IMR-90 (cell line): ENCODE measurements at regions of chr17 and their contacts with region 1.

Region 1: DNA sequence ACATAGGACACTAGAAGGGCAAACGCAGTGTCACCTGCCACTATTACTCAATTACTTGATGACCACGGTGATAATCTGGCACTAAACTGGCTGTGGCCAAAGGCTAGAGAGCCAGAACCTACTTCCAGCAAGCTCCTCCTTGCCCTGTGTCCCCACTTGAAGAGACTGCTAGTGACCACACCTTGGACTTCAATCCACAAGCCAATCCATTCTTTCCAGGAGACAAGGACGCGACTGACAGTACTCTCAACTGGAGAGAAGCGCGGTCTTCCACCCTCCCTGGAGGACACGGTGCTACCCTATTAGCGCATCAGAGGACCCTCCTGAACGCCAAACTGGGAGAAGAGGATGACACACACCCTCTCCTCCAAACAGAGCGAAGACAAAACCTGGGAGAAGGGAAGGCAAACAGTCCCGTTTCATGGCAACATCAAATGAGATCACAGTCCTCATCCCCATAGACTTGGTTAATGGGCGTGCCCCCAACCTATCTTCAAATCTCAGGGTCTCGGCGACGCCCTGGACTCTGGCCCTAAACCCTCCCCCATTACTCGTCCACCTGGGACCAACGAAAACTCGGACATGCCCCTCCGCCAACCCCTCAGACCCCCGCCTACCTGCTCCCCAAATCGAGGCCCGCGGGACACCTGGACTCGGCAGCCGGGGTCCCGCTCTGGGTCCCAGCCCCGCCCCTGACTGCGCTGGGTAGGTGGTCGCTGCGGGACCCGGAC is 508 bp downstream of the FLCN start:
- DNase-seq: peak; percentile 31
- ATAC-seq: peak; percentile 25
- H3K4me3 ChIP-seq: peak overlapping the region; percentile 93
- H3K27ac ChIP-seq: peak overlapping the region; percentile 100
- H3K4me1 ChIP-seq: peaks cover 4% of the 10 kb centered on the region
- H3K27me3 ChIP-seq: no peaks in the 10 kb centered on the region
- CTCF ChIP-seq: no peak
- POLR2A ChIP-seq: no peak
- RAD21 ChIP-seq: no peak

Region 2: GRCh38 chr17:17141860-17142552 is 94.5 kb before region 1 on chr17:
- CTCF ChIA-PET with region 1: no interaction called
- POLR2A ChIA-PET with region 1: no interaction called
- dilution Hi-C with region 1: no loop called
- in situ Hi-C with region 1: no loop called
- intact Hi-C with region 1: loop called (anchors 1 kb)
- DNase-seq: peak; percentile 50
- ATAC-seq: peak; percentile 62
- H3K4me3 ChIP-seq: no peak overlapping the region
- H3K27ac ChIP-seq: no peak overlapping the region
- H3K4me1 ChIP-seq: peaks cover 8% of the 10 kb centered on the region
- H3K27me3 ChIP-seq: no peaks in the 10 kb centered on the region
- CTCF ChIP-seq: peak; percentile 81
- POLR2A ChIP-seq: no peak
- RAD21 ChIP-seq: peak; percentile 81

Region 3: DNA sequence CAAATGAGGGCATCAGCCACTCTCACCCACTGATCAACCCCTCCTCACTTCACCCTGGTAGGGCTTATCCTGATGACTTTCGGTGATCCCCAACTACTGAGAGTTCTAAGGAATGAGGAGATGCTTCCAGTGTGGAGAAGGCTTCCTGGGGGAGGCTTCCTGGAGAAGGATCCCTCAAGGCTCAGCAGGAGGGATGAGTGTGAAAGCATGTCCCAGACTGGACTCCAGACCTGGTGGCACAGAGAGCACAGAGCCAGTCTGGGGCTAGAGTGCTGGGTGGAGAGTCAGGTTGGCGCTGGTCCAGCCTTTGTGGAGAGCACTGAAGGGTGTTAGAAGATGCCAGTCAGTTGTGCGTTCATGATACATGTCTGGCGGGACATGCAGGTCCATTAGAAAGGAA is 84.1 kb before region 1 on chr17:
- CTCF ChIA-PET with region 1: no interaction called
- POLR2A ChIA-PET with region 1: no interaction called
- dilution Hi-C with region 1: no loop called
- in situ Hi-C with region 1: no loop called
- intact Hi-C with region 1: no loop called
- DNase-seq: no peak
- ATAC-seq: 0 out of 2 replicates have a peak, but pooled peaks have one; percentile 1
- H3K4me3 ChIP-seq: no peak overlapping the region
- H3K27ac ChIP-seq: peak overlapping the region; percentile 60
- H3K4me1 ChIP-seq: peaks cover 29% of the 10 kb centered on the region
- H3K27me3 ChIP-seq: no peaks in the 10 kb centered on the region
- CTCF ChIP-seq: no peak
- POLR2A ChIP-seq: no peak
- RAD21 ChIP-seq: no peak